Naive thymus-derived CD4-positive, alpha-beta T cell (primary cell): ENCODE measurements at regions of chr18 and their contacts with region 1.

Region 1: DNA sequence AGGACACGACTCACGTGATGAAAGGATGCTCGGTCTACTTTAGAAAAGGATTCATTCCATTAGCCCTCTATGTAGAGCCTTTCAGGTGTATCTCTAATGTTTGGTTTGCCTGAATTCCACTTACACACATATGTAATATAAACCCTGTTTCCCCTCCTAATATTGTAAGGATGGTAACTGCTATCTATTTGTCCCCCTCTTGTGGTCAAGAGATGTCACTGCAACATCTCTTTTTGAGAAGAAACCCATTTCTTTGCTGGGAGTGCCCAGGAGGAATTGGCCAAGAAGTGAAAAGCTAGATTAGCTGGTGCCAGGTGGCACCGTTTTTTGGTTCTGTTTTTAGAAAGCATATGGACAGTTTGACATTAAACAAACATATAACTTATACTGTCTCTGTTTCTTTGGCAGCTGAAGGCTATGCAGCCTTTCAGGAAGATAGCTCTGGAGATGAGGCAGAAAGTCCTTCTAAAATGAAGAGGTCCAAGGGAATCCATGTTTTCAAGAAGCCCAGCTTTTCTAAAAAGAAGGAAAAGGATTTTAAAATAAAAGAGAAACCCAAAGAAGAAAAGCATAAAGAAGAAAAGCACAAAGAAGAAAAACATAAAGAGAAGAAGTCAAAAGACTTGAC is 41.2 kb downstream of the RALBP1 start:
- DNase-seq: peak in 6 of 9 donors; percentile 11 to 57 (median 48)
- ATAC-seq: peak; percentile 80
- H3K4me3 ChIP-seq: no peak overlapping the region
- H3K4me3 Mint-ChIP-seq: no peak overlapping the region
- H3K27ac ChIP-seq: no peak overlapping the region
- H3K27ac Mint-ChIP-seq: peak overlapping the region in 1 of 9 donors; percentile 31
- H3K4me1 ChIP-seq: no peaks in the 10 kb centered on the region
- H3K4me1 Mint-ChIP-seq: peaks cover 0 to 14% (median 6%) of the 10 kb centered on the region in 7 donors
- H3K27me3 ChIP-seq: no peaks in the 10 kb centered on the region
- H3K27me3 Mint-ChIP-seq: no peaks in the 10 kb centered on the region

Region 2: DNA sequence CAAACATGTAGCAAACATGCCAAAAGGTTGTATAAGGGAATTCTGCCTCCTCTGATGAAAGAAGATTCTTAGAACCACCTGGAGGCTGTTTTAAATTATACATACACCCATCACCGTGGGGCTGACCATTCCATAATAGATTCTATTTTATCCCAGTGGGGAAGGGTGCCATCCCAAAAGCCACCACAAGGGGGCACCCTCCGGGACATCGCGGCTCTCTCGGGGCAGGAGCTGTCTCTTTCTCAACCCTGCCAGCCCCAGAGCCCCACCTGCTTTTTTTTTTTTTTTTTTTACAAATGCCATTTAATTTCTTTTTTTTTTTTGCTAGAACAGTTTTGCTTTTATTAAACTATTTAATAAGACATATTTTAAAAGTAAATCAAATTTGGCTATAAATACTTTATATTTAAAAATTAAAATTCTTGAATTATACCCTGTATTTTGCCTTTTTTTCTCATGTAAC is 819.8 kb before region 1 on chr18:
- CTCF ChIA-PET with region 1: no interaction called
- POLR2A ChIA-PET with region 1: no interaction called
- intact Hi-C with region 1: loop called in 1 of 2 experiments (anchors 2 kb)
- DNase-seq: peak; percentile 48 to 81 (median 67)
- ATAC-seq: peak; percentile 97
- H3K4me3 ChIP-seq: no peak overlapping the region
- H3K4me3 Mint-ChIP-seq: no peak overlapping the region
- H3K27ac ChIP-seq: no peak overlapping the region
- H3K27ac Mint-ChIP-seq: no peak overlapping the region
- H3K4me1 ChIP-seq: no peaks in the 10 kb centered on the region
- H3K4me1 Mint-ChIP-seq: no peaks in the 10 kb centered on the region
- H3K27me3 ChIP-seq: no peaks in the 10 kb centered on the region
- H3K27me3 Mint-ChIP-seq: peaks cover 16 to 30% (median 26%) of the 10 kb centered on the region in 5 donors

Region 3: GRCh38 chr18:9210966-9211365 is 305.6 kb before region 1 on chr18:
- CTCF ChIA-PET with region 1: interaction called, 4 read pairs
- POLR2A ChIA-PET with region 1: no interaction called
- intact Hi-C with region 1: loop called (anchors 5 to 10 kb)
- DNase-seq: no peak
- ATAC-seq: no peak
- H3K4me3 ChIP-seq: no peak overlapping the region
- H3K4me3 Mint-ChIP-seq: no peak overlapping the region
- H3K27ac ChIP-seq: no peak overlapping the region
- H3K27ac Mint-ChIP-seq: peak overlapping the region in 1 of 9 donors; percentile 72
- H3K4me1 ChIP-seq: peaks cover 0 to 6% of the 10 kb centered on the region in 2 donors
- H3K4me1 Mint-ChIP-seq: peaks cover 0 to 42% (median 14%) of the 10 kb centered on the region in 7 donors
- H3K27me3 ChIP-seq: no peaks in the 10 kb centered on the region
- H3K27me3 Mint-ChIP-seq: no peaks in the 10 kb centered on the region

Region 4: GRCh38 chr18:9275890-9276289 is 240.7 kb before region 1 on chr18:
- CTCF ChIA-PET with region 1: no interaction called
- POLR2A ChIA-PET with region 1: no interaction called
- intact Hi-C with region 1: loop called in 1 of 2 experiments (anchors 5 kb)
- DNase-seq: no peak
- ATAC-seq: no peak
- H3K4me3 ChIP-seq: no peak overlapping the region
- H3K4me3 Mint-ChIP-seq: no peak overlapping the region
- H3K27ac ChIP-seq: no peak overlapping the region
- H3K27ac Mint-ChIP-seq: peak overlapping the region in 3 of 9 donors; percentile 8 to 19 (median 14)
- H3K4me1 ChIP-seq: no peaks in the 10 kb centered on the region
- H3K4me1 Mint-ChIP-seq: peaks cover 0 to under 1% (median 0%) of the 10 kb centered on the region in 7 donors
- H3K27me3 ChIP-seq: no peaks in the 10 kb centered on the region
- H3K27me3 Mint-ChIP-seq: no peaks in the 10 kb centered on the region

Region 5: DNA sequence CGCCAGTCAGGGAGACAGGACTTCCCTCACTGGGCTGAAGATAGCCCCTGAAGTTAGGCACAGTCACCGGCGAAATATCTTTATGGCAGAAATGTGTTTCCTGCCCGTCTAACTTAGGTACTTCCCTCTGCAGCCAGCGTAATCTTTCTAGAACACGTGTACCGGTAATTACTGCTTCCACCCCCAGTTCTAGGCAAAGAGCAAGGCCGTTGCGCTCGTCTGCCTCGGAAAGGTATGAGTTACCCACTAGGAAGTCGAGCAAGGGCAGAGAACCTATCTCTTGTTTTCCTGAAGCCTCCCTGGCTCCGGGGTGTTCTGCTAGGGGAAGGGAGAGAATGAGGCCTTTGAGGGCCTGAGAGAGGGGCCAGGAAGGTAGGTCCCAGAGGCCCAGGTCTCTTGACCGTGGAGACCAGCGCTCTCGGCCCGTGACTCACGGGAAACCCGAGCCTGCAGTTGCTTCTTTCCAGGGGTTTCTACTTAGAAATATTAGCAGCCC is 111.9 kb before region 1 on chr18:
- CTCF ChIA-PET with region 1: no interaction called
- POLR2A ChIA-PET with region 1: no interaction called
- intact Hi-C with region 1: loop called in 1 of 2 experiments (anchors 10 kb)
- DNase-seq: peak in 7 of 9 donors; percentile 1 to 53 (median 11)
- ATAC-seq: peak; percentile 74
- H3K4me3 ChIP-seq: no peak overlapping the region
- H3K4me3 Mint-ChIP-seq: peak overlapping the region; percentile 49 to 90 (median 82)
- H3K27ac ChIP-seq: no peak overlapping the region
- H3K27ac Mint-ChIP-seq: peak overlapping the region in 4 of 9 donors; percentile 60 to 78 (median 78)
- H3K4me1 ChIP-seq: no peaks in the 10 kb centered on the region
- H3K4me1 Mint-ChIP-seq: peaks cover 6 to 25% (median 12%) of the 10 kb centered on the region in 7 donors
- H3K27me3 ChIP-seq: no peaks in the 10 kb centered on the region
- H3K27me3 Mint-ChIP-seq: peaks cover 0 to 7% (median 5%) of the 10 kb centered on the region in 5 donors